Esophagus squamous epithelium (tissue), 5 donors: ENCODE measurements at regions of chr9 and their contacts with region 1.

Region 1: GRCh38 chr9:77456829-77457437 is 191.2 kb downstream of the GNA14 start:
- DNase-seq: no peak
- H3K4me3 ChIP-seq: no peak overlapping the region
- H3K27ac ChIP-seq: no peak overlapping the region
- H3K4me1 ChIP-seq: peaks cover 0 to 12% (median 3%) of the 10 kb centered on the region in 3 donors
- H3K27me3 ChIP-seq: no peaks in the 10 kb centered on the region
- CTCF ChIP-seq: peak; percentile 60 to 91 (median 88)
- POLR2A ChIP-seq: no peak

Region 2: GRCh38 chr9:77386187-77386586 is 70.7 kb before region 1 on chr9:
- intact Hi-C with region 1: no loop called
- DNase-seq: no peak
- H3K4me3 ChIP-seq: no peak overlapping the region
- H3K27ac ChIP-seq: no peak overlapping the region
- H3K4me1 ChIP-seq: no peaks in the 10 kb centered on the region
- H3K27me3 ChIP-seq: no peaks in the 10 kb centered on the region
- CTCF ChIP-seq: no peak
- POLR2A ChIP-seq: no peak

Region 3: DNA sequence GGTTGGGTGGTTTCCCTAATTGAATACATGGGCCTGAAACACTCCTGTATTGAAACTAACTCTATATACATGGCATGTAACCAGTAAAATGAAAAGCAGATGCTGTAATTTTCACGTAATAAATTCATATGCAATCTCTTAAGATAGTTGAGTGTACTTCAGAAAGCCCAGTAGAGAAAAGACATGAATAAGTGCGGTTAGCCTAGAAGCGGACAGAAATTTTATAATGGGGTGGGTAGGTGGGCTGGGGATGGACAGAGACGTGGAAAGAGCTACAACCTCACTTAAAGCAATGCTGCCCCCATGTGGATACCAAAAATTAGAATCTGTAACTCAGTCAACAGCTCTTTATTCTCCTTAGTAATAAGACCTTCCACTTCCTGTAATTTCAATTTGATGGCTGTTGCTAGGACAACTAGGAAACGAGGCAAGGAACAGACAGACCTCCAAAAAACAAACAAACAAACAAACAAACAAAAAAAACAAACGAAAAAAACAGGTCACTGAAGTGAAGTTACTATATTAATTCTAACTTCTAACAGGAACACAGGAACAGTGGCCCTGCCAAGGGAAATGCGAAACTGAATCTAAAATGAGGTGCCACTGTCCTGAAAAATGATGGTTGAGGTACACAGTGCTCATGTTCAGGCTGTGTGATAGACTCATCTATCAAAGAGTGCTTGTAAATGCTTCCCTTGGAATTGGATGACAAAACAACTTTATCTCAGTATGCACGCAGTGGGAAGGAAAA is 294.6 kb after region 1 on chr9:
- intact Hi-C with region 1: loop called (anchors 10 kb)
- DNase-seq: no peak
- H3K4me3 ChIP-seq: no peak overlapping the region
- H3K27ac ChIP-seq: peak overlapping the region in 3 of 4 donors; percentile 20 to 53 (median 44)
- H3K4me1 ChIP-seq: peaks cover 0 to 17% (median 0%) of the 10 kb centered on the region in 3 donors
- H3K27me3 ChIP-seq: no peaks in the 10 kb centered on the region
- CTCF ChIP-seq: peak in 5 of 6 experiments; percentile 25 to 58 (median 46)
- POLR2A ChIP-seq: no peak